Activated naive CD4-positive, alpha-beta T cell treated with anti-CD3 and anti-CD28 coated beads for 36 hours (primary cell): ENCODE measurements at regions of chr6 and their contacts with region 1.

Region 1: GRCh38 chr6:85593438-85594196 is at the start of gene SNX14:
- DNase-seq: peak; percentile 77
- H3K4me3 Mint-ChIP-seq: peak within 1 kb of the TSS; percentile 93
- H3K27ac Mint-ChIP-seq: peak within 1 kb of the TSS; percentile 94
- H3K4me1 Mint-ChIP-seq: peaks cover 30% of the 10 kb centered on the region
- H3K27me3 Mint-ChIP-seq: no peaks in the 10 kb centered on the region
- total RNA-seq, gene SNX14: 18.8 to 22.6 TPM

Region 2: DNA sequence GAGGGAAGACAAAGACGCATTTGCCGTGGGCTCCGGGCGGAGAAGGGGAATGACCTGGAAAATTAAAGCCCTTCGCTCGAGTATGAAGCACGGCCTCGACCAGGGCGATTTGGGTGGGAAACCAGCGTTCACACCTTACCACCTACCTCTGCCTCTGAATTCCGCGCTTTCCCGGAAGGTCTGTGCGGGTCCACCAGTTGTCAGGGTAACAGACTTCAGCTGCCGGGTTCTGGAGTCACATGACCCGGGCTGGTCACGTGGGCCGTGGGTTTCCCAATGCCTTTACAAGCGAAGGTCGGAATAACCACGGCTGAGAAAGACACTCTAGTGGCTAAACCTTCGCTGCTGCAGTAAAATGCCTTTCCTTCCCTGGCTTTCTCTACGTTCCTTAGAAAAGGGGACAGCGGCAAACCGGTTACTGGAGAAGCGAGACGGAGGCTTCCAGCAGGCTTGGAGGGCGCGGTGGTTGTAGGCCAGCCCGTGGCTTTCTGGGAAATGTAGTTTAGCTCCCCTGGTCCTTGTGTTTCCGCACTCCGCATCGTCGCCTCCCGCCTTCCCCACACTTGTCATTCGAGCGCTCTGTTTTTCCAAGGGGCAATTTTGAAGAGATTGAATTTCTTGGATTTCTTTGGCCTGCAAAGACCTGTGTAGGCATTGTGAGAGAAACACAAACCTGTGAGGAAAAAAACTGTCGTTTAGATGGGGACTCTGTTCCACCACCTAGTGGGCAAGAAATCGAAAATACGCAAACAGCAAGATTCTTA is 1366.0 kb before region 1 on chr6 and contains the start of gene CEP162:
- CTCF ChIA-PET with region 1: no interaction called
- intact Hi-C with region 1: loop called (anchors 5 kb)
- DNase-seq: peak; percentile 91
- H3K4me3 Mint-ChIP-seq: peak within 1 kb of the TSS; percentile 99
- H3K27ac Mint-ChIP-seq: peak within 1 kb of the TSS; percentile 93
- H3K4me1 Mint-ChIP-seq: peaks cover 11% of the 10 kb centered on the region
- H3K27me3 Mint-ChIP-seq: peaks cover 5% of the 10 kb centered on the region
- total RNA-seq, gene CEP162: 4.4 to 5.0 TPM

Region 3: GRCh38 chr6:85460921-85461797 is 132.5 kb before region 1 on chr6:
- CTCF ChIA-PET with region 1: no interaction called
- intact Hi-C with region 1: loop called (anchors 1 kb)
- DNase-seq: peak; percentile 67
- H3K4me3 Mint-ChIP-seq: no peak overlapping the region
- H3K27ac Mint-ChIP-seq: peak overlapping the region; percentile 81
- H3K4me1 Mint-ChIP-seq: peaks cover 65% of the 10 kb centered on the region
- H3K27me3 Mint-ChIP-seq: peaks cover 6% of the 10 kb centered on the region

Region 4: GRCh38 chr6:85612690-85613474 is 19.3 kb after region 1 on chr6:
- CTCF ChIA-PET with region 1: interaction called, 3 read pairs
- intact Hi-C with region 1: loop called (anchors 1 kb)
- DNase-seq: no peak
- H3K4me3 Mint-ChIP-seq: no peak overlapping the region
- H3K27ac Mint-ChIP-seq: no peak overlapping the region
- H3K4me1 Mint-ChIP-seq: peaks cover 7% of the 10 kb centered on the region
- H3K27me3 Mint-ChIP-seq: no peaks in the 10 kb centered on the region

Region 5: DNA sequence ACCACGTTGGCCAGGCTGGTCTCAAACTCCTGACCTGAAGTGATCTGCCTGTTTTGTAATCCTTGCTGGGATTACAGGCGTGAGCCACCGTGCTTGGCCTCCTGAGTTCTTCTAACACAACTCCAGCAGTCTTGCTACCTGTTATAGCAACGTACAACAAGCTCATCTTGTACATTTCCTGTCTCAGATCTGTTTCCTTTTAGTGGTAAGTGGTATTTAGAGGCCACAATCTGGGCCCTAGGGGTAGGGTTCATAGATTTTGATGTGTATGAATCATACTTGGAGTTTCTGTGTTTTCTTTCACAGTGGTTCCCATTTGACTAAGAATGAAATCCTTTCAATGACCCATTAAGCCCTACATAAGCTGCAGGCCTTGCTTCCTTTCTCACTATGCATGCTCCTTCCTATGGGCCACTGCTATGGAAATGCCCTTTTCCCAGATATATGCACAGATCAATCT is 76.1 kb after region 1 on chr6:
- CTCF ChIA-PET with region 1: no interaction called
- intact Hi-C with region 1: loop called (anchors 1 kb)
- DNase-seq: peak; percentile 55
- H3K4me3 Mint-ChIP-seq: peak overlapping the region; percentile 52
- H3K27ac Mint-ChIP-seq: peak overlapping the region; percentile 87
- H3K4me1 Mint-ChIP-seq: peaks cover 50% of the 10 kb centered on the region
- H3K27me3 Mint-ChIP-seq: no peaks in the 10 kb centered on the region

Region 6: DNA sequence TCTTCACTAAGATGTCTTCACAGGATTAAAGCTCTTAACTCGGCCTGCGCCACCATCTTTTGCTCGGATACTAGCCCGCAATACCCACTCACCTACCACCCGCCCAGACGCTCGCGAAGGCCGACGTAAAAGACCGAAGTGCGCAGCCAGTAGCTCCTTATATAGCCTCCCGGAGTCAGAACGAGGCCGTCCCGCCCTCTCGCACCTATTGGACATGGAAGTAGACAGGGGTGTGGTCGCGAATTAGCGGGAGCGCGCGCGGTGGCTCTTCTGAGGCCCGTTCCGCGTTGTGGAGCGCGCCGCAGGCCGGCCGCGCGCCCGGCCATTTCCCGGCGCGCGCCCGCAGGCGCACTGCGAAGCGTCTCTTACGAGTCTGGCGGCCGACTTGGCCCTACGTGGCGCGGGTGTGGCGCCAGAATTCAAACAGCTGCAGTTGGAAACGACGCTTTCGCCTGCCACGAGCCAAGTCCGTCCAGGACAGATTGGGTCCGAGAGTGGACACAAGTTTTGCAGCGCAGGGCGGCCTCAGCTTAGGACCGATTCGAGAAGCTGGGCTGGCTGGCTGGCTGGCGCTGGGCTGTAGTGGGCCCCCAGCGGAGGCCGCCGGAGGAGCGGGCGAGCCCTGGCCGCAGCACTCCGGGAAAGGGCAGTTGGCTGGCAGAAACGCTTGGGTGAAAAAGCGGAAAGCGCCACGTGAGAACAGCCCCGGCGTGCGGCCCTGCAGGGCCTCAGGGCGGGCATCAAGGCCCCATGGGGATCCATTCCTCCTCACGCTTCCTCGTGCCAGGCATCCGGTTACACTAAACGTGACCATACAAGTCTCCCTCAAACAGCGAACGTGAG is 85.2 kb after region 1 on chr6:
- CTCF ChIA-PET with region 1: no interaction called
- intact Hi-C with region 1: loop called (anchors 1 kb)
- DNase-seq: peak; percentile 96
- H3K4me3 Mint-ChIP-seq: peak overlapping the region; percentile 97
- H3K27ac Mint-ChIP-seq: peak overlapping the region; percentile 96
- H3K4me1 Mint-ChIP-seq: peaks cover 31% of the 10 kb centered on the region
- H3K27me3 Mint-ChIP-seq: no peaks in the 10 kb centered on the region